Transverse colon (tissue), 4 donors: ENCODE measurements at regions of chr14 and their contacts with region 1.

Region 1: DNA sequence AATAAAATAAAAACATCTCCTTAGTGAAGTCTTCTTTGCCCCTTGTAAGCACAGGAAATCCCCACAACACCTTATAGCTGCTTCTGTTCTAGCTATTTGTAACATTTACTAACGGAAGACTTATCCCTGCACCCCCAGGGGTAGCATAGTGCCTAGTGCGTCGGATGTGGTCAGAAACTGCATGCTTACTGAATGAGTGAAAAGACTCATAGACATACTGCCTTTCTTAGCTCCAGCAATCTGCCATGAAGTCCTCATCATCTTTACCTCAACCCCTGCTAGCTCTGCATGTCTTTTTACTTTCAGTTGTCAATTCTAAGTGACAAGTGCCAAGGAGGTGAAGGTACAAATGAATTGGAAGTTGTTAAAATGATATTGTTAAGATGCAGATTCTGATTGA is 12.9 kb downstream of the RIOX1 start:
- DNase-seq: no peak
- H3K4me3 ChIP-seq: no peak overlapping the region
- H3K27ac ChIP-seq: no peak overlapping the region
- H3K4me1 ChIP-seq: no peaks in the 10 kb centered on the region
- H3K27me3 ChIP-seq: no peaks in the 10 kb centered on the region
- CTCF ChIP-seq: no peak
- EP300 ChIP-seq: no peak
- POLR2A ChIP-seq: no peak

Region 2: DNA sequence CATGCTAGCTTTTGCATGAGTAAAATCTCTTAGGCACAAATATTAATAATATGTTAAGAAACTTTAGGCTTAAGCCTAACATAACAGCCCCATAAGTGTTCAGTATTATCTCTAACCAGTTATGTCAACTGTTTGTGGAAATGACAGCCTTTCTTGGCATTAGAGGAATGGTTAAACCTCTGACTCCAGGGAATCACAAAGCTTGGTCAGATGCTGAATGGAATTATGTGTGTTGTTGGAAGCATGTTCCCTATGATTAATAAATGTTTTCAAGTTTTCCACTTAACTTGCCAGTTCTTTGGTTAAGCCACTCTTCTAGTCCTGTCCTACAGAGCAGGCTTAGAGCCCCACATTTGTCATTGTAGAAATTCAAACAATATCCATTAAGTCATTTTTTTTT is 350.4 kb before region 1 on chr14:
- in situ Hi-C with region 1: no loop called
- intact Hi-C with region 1: no loop called
- DNase-seq: no peak
- H3K4me3 ChIP-seq: no peak overlapping the region
- H3K27ac ChIP-seq: no peak overlapping the region
- H3K4me1 ChIP-seq: no peaks in the 10 kb centered on the region
- H3K27me3 ChIP-seq: no peaks in the 10 kb centered on the region
- CTCF ChIP-seq: no peak
- EP300 ChIP-seq: no peak
- POLR2A ChIP-seq: no peak

Region 3: GRCh38 chr14:73403181-73403752 is 100.4 kb before region 1 on chr14:
- in situ Hi-C with region 1: no loop called
- intact Hi-C with region 1: no loop called
- DNase-seq: no peak
- H3K4me3 ChIP-seq: no peak overlapping the region
- H3K27ac ChIP-seq: no peak overlapping the region
- H3K4me1 ChIP-seq: peaks cover 8 to 11% (median 9%) of the 10 kb centered on the region in 4 donors
- H3K27me3 ChIP-seq: no peaks in the 10 kb centered on the region
- CTCF ChIP-seq: no peak
- EP300 ChIP-seq: no peak
- POLR2A ChIP-seq: no peak

Region 4: DNA sequence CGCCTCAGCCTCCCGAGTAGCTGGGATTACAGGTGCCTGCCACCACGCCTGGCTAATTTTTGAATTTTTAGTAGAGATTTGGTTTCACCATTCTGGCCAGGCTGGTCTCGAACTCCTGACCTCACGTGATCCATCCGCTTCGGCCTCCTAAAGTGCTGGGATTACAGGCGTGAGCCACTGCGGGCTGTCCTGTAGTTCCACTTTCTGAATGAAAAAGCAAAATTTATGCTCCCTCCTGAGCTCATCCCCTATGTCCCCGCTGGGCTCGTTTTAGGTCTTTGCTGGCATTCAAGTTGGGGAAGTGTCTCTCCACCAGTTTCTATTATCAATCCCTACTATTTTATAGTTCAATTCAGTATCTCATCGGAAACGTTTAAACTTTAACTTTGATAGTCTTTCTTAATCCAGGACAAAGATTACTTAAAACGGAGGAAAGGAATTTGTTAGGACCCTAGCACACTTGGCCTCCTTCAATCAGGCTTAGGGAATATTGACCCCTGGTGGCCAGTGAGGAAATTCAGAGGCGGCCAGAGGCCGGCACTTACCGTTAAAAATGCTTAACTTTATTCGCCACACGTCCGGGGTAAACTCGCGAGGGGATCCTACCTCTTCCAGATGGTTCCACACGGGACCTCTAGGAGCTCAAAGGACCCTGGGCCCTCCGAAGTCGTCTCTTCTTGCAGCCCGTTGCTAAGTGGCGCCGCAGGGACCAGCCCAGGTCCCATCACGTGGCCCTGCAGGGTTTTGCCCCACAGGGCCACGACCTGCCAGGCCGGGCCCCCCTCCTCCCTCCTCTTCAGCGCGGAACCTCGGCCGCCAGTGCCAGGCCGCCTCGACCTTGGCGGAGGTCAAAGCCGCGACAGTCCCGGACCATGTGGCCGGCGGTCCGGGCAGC is 129.7 kb after region 1 on chr14:
- in situ Hi-C with region 1: loop called (anchors 5 to 25 kb)
- intact Hi-C with region 1: loop called (anchors 5 kb)
- DNase-seq: peak; percentile 69
- H3K4me3 ChIP-seq: peak overlapping the region; percentile 13 to 74 (median 48)
- H3K27ac ChIP-seq: peak overlapping the region; percentile 26 to 41 (median 30)
- H3K4me1 ChIP-seq: peaks cover 4 to 16% (median 11%) of the 10 kb centered on the region in 4 donors
- H3K27me3 ChIP-seq: no peaks in the 10 kb centered on the region
- CTCF ChIP-seq: peak; percentile 84 to 96 (median 87)
- EP300 ChIP-seq: no peak
- POLR2A ChIP-seq: no peak

Region 5: GRCh38 chr14:73644531-73645247 is 141.0 kb after region 1 on chr14 and contains the start of gene DNAL1:
- in situ Hi-C with region 1: loop called in 2 of 4 experiments (anchors 10 to 25 kb)
- intact Hi-C with region 1: no loop called
- DNase-seq: peak; percentile 94
- H3K4me3 ChIP-seq: peak within 1 kb of the TSS; percentile 53 to 87 (median 80)
- H3K27ac ChIP-seq: peak within 1 kb of the TSS; percentile 85 to 91 (median 86)
- H3K4me1 ChIP-seq: peaks cover 11 to 20% (median 13%) of the 10 kb centered on the region in 4 donors
- H3K27me3 ChIP-seq: no peaks in the 10 kb centered on the region
- CTCF ChIP-seq: no peak
- EP300 ChIP-seq: no peak
- POLR2A ChIP-seq: peak; percentile 53
- total RNA-seq, gene DNAL1: 0.80 to 6.3 (median 2.9) TPM

Region 6: GRCh38 chr14:73825551-73826188 is 322.0 kb after region 1 on chr14:
- in situ Hi-C with region 1: loop called in 1 of 4 experiments (anchors 25 kb)
- intact Hi-C with region 1: no loop called
- DNase-seq: peak; percentile 94
- H3K4me3 ChIP-seq: no peak overlapping the region
- H3K27ac ChIP-seq: peak overlapping the region in 3 of 4 donors; percentile 18 to 40 (median 28)
- H3K4me1 ChIP-seq: peaks cover 6 to 22% (median 13%) of the 10 kb centered on the region in 4 donors
- H3K27me3 ChIP-seq: no peaks in the 10 kb centered on the region
- CTCF ChIP-seq: peak; percentile 84 to 96 (median 88)
- EP300 ChIP-seq: no peak
- POLR2A ChIP-seq: no peak